ENCODE measurements at regions of chr4 and their contacts with region 1.

Region 1: DNA sequence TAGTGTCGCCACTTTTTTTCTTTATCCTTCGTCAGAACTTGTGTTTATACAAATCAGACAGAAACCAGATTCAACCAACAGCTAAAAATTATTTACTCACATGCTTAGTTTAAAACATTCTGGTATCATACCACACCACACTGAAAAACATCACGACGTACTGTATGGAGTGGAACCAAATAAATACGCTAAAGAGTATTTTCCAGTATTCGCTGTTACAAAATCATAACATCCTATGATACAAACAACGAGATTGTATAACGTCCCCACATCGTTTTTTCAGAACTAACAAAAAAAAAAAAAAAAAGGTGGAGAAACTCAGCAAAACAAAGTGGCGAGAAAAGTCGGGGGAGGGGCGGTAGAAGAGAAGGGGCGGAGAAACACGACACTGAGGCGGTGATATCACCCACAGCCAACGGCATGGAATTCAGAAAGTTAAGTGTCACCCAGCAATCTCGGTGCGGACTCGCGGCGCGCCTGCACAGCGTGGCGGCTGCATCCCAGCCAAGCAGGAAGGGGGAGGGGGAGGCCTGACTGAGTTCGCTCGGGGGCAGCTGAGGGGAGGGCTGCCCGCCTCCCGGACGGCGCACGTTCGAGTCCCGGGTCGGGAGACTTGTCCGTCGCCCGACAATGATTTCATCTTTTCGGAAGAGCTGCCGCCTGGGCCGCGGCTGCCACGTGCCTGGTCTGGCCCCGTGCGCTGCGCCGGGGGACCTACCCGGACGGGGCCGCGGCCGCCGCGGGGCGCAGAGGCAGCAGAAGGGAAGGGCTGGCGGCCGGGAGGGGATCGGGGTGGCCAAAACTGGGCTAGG is 920 bp downstream of the SETD7 start:
- DNase-seq: peak; percentile 65 to 93 (median 88)
- ATAC-seq: peak; percentile 85
- H3K4me3 ChIP-seq: peak overlapping the region; percentile 68
- H3K4me3 Mint-ChIP-seq: peak overlapping the region; percentile 89 to 99 (median 98)
- H3K27ac ChIP-seq: peak overlapping the region; percentile 76
- H3K27ac Mint-ChIP-seq: peak overlapping the region; percentile 86 to 98 (median 97)
- H3K4me1 ChIP-seq: peaks cover 4 to 11% of the 10 kb centered on the region in 2 donors
- H3K4me1 Mint-ChIP-seq: peaks cover 19 to 49% (median 40%) of the 10 kb centered on the region in 7 donors
- H3K27me3 ChIP-seq: no peaks in the 10 kb centered on the region
- H3K27me3 Mint-ChIP-seq: peaks cover 0 to 11% (median 0%) of the 10 kb centered on the region in 5 donors

Region 2: DNA sequence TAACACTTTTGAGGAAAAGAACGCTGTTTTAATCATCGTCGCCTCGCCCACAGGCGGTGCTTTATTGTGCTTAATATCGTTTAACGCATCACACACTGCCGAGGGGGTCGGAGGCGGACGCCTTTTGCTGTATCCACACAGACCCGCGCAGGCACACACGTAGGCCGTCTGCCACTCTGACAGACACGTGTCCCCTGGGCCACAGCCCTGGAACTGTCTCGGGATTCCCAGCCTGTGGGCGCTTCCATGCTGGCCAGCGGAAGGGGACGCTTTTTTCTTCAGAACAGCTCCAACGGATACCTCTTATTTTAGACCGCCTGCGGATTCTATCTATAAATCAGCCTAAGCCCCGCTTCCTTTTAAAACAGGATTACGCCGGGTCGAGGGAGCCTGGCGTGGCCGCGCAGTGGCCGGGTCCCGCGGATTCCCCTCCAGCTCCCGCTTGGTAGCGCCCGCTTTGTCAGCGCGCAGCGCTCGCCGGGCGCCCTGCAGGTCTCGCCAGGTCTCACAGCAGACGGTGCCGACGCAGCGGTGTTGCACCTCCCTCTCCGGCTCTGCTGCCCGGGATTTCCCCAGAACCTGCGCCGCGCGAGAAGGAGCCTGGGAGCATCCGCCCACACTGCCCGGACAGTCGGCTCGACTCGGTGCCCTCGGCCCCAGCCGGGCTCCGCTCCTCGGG is 539.7 kb before region 1 on chr4 and contains the start of gene NOCT:
- CTCF ChIA-PET with region 1: no interaction called
- POLR2A ChIA-PET with region 1: interaction called, 7 read pairs
- intact Hi-C with region 1: loop called (anchors 1 to 2 kb)
- DNase-seq: peak; percentile 82 to 92 (median 89)
- ATAC-seq: peak; percentile 94
- H3K4me3 ChIP-seq: peak within 1 kb of the TSS; percentile 65
- H3K4me3 Mint-ChIP-seq: peak within 1 kb of the TSS; percentile 82 to 93 (median 88)
- H3K27ac ChIP-seq: peak within 1 kb of the TSS; percentile 91
- H3K27ac Mint-ChIP-seq: peak within 1 kb of the TSS; percentile 76 to 99 (median 94)
- H3K4me1 ChIP-seq: peaks cover 7 to 10% of the 10 kb centered on the region in 2 donors
- H3K4me1 Mint-ChIP-seq: peaks cover 14 to 44% (median 24%) of the 10 kb centered on the region in 7 donors
- H3K27me3 ChIP-seq: no peaks in the 10 kb centered on the region
- H3K27me3 Mint-ChIP-seq: no peaks in the 10 kb centered on the region
- total RNA-seq, gene NOCT: 1.6 to 33.7 (median 8.8) TPM

Region 3: GRCh38 chr4:139301113-139301820 is 253.8 kb before region 1 on chr4 and contains the start of gene NAA15:
- CTCF ChIA-PET with region 1: no interaction called
- POLR2A ChIA-PET with region 1: interaction called, 4 read pairs
- intact Hi-C with region 1: loop called (anchors 1 kb)
- DNase-seq: peak; percentile 88 to 99 (median 97)
- ATAC-seq: peak; percentile 95
- H3K4me3 ChIP-seq: peak within 1 kb of the TSS; percentile 83
- H3K4me3 Mint-ChIP-seq: peak within 1 kb of the TSS; percentile 96 to 100 (median 100)
- H3K27ac ChIP-seq: peak within 1 kb of the TSS; percentile 92
- H3K27ac Mint-ChIP-seq: peak within 1 kb of the TSS; percentile 97 to 100 (median 99)
- H3K4me1 ChIP-seq: peaks cover 22 to 28% of the 10 kb centered on the region in 2 donors
- H3K4me1 Mint-ChIP-seq: peaks cover 17 to 76% (median 58%) of the 10 kb centered on the region in 7 donors
- H3K27me3 ChIP-seq: no peaks in the 10 kb centered on the region
- H3K27me3 Mint-ChIP-seq: no peaks in the 10 kb centered on the region
- total RNA-seq, gene NAA15: 41.2 to 67.4 (median 49.0) TPM

Region 4: GRCh38 chr4:139530833-139531427 is 24.2 kb before region 1 on chr4:
- CTCF ChIA-PET with region 1: interaction called, 4 read pairs
- POLR2A ChIA-PET with region 1: interaction called, 4 read pairs
- intact Hi-C with region 1: loop called in 1 of 2 experiments (anchors 1 kb)
- DNase-seq: peak; percentile 29 to 63 (median 50)
- ATAC-seq: peak; percentile 79
- H3K4me3 ChIP-seq: no peak overlapping the region
- H3K4me3 Mint-ChIP-seq: no peak overlapping the region
- H3K27ac ChIP-seq: no peak overlapping the region
- H3K27ac Mint-ChIP-seq: no peak overlapping the region
- H3K4me1 ChIP-seq: peaks cover 0 to 14% of the 10 kb centered on the region in 2 donors
- H3K4me1 Mint-ChIP-seq: peaks cover 0 to 10% (median 0%) of the 10 kb centered on the region in 7 donors
- H3K27me3 ChIP-seq: no peaks in the 10 kb centered on the region
- H3K27me3 Mint-ChIP-seq: no peaks in the 10 kb centered on the region

Region 5: DNA sequence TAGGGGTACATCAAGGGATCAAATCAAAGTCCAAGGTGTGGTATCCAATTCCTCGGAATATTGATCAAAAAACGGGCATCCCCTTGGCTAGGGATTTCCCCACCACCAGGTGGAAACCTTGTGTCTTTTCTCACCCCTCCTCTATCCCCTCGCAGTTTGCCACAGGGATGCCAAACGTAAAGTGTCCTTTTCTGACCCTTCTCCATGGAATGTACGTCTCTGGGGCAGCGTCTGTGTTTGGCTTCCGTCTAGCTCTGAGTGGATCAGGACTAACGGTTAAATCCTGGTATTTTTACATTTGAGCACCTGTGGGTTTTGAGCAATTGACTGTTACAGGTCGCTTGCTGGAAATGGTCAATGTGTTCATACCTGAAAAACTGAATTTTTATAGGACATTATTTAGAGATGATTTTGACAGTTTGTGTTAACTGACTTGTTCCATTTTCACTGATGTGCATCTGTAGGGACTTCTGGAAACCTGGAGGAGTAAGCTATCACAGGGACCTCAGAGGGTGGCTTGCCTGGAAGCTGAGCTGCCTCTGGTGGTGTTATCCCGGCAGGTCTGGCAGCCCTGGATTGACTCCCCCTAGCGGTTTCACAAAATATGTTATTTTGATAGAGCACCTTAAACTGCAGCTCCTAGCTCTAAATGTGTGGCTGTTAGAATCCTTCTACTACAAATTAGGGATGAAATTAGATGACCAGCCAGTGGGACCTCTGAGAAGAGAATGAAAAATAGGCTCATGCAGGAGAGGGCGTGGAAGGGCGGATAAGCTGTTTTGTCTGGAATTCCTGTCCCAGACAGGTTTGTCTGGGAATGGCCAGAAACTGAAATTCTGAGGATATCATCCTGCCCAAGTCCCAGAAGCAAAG is 101.8 kb after region 1 on chr4:
- CTCF ChIA-PET with region 1: interaction called, 5 read pairs
- POLR2A ChIA-PET with region 1: no interaction called
- intact Hi-C with region 1: loop called in 1 of 2 experiments (anchors 2 kb)
- DNase-seq: peak in 8 of 9 donors; percentile 29 to 67 (median 56)
- ATAC-seq: peak; percentile 87
- H3K4me3 ChIP-seq: no peak overlapping the region
- H3K4me3 Mint-ChIP-seq: peak overlapping the region in 8 of 10 donors; percentile 5 to 86 (median 22)
- H3K27ac ChIP-seq: no peak overlapping the region
- H3K27ac Mint-ChIP-seq: peak overlapping the region in 5 of 9 donors; percentile 31 to 98 (median 87)
- H3K4me1 ChIP-seq: peaks cover 0 to 5% of the 10 kb centered on the region in 2 donors
- H3K4me1 Mint-ChIP-seq: peaks cover 17 to 41% (median 18%) of the 10 kb centered on the region in 7 donors
- H3K27me3 ChIP-seq: no peaks in the 10 kb centered on the region
- H3K27me3 Mint-ChIP-seq: peaks cover 0 to 5% (median 5%) of the 10 kb centered on the region in 5 donors

Measured in naive thymus-derived CD4-positive, alpha-beta T cell (primary cell).